GM10248 (cell line): ENCODE measurements at regions of chr6 and their contacts with region 1.

Region 1: DNA sequence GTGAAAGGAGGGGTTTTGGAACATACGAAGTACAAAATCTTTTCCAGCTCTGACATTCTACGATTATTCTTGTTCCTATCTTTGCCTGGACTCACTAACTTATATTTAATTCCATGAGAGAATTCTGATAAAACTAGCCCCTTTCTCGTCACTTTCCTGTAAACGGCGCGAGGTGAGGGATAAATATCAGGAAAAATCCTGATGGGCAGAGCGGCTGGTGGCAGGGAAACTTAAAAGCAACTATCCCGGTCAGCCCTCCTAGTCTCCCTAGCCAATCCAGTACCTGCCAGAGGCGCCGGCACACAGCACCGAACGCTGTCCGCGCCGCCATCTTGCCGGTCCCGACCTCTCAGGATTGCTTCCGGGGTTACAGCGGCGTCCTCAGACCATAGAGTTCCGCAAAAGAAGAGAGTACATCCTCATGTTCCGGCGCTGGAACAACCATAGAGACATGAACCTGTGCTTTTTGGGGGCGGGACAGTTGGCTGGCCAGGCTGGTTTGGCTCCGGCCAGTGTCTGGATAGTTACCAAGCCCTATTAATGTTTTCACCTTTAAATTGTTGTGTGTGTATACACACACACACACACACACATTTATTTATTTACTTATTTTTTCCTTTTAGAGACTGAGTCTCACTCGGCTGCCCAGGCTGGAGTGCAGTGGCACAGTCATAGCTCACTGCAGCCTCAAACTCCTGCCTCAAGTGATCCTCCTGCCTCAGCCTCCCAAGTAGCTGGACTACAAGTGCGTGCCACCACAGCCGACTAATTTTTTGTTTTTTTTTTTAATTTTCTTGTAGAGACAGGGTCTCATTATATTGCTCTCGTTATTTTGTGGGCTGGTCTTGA is at the start of gene MRPS10:
- DNase-seq: peak; percentile 92
- CTCF ChIP-seq: no peak

Region 2: GRCh38 chr6:42193491-42193894 is 24.2 kb before region 1 on chr6:
- CTCF ChIA-PET with region 1: interaction called, 10 read pairs
- POLR2A ChIA-PET with region 1: no interaction called
- DNase-seq: no peak
- CTCF ChIP-seq: no peak

Region 3: DNA sequence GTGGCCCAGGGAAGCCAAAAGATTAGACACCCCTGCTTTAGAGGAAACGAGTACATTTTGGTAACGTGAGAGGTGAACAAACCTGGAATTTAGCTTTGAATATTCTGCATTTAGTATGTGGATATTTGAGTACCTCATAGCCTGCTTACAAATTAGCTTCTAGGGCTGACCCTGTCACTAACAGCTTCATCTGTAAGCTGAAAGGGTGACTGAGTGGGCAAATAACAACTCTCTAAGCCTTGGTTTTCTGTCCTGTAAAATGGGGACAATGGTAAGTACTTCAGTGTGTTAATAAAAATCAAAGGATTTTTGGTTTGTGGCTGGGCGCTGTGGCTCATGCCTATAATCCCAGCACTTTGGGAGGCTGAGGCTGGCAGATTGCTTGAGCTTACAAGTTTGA is 14.6 kb before region 1 on chr6:
- CTCF ChIA-PET with region 1: interaction called, 13 read pairs
- POLR2A ChIA-PET with region 1: no interaction called
- DNase-seq: no peak
- CTCF ChIP-seq: no peak

Region 4: GRCh38 chr6:42230345-42231321 is 12.9 kb after region 1 on chr6:
- CTCF ChIA-PET with region 1: interaction called, 14 read pairs
- POLR2A ChIA-PET with region 1: no interaction called
- DNase-seq: peak; percentile 43
- CTCF ChIP-seq: peak; percentile 37